ENCODE measurements at regions of chr6 and their contacts with region 1.

Region 1: DNA sequence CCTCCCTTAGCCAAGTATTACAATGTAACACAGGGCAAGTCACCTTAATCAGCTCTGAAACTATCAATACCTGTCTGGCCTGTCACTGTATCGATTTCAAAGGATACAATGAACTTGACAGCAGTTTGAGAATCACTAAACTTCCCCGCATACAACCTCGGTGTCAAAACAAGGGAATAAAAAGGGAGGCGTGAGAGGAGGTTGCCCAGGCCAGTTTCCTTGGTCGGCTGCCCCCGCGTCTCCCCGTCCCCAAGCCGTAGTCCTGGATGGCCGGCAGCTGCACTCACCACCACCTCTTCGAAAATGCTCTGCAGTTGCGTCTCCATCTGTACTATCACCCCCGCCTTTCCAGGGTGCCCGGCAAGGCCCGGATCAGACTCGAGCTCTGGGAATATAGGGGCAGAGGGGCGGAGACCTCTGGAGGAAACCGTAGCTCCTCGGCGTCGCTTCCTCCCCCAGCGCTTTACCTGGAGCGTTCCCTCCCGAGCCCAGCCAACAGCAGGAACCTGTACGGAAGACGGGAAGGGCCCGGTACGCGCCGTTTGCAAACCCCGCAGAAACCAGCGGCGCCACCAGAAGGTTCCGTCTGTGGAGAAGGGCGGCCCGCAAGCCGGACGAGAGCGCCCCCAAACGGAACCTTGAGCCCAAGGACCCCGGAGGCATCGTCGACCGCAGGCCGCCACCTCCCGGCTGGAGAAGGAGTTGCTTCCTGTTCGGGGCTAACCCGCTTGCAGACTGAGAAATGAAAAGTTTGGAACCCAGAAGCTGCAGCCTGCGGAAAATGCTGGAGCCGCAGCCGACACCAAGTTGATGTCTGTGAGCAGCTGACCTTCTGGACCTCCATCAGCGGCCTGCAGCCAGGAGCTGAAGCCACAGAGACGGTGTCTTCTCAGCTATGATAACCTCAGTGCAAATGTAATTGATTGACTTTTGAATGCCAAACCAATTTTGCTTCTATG is at the start of gene MED23:
- DNase-seq: peak; percentile 91
- H3K4me3 ChIP-seq: peak within 1 kb of the TSS; percentile 86
- H3K27ac ChIP-seq: peak within 1 kb of the TSS; percentile 41
- H3K27me3 ChIP-seq: peaks cover 3% of the 10 kb centered on the region
- CTCF ChIP-seq: peak; percentile 100
- polyA plus RNA-seq, gene MED23: 32.5 and 40.1 TPM in 2 replicates

Region 2: GRCh38 chr6:131581523-131581922 is 46.5 kb before region 1 on chr6:
- CTCF ChIA-PET with region 1: interaction called, 13 read pairs
- POLR2A ChIA-PET with region 1: no interaction called
- DNase-seq: no peak
- H3K4me3 ChIP-seq: no peak overlapping the region
- H3K27ac ChIP-seq: no peak overlapping the region
- H3K27me3 ChIP-seq: no peaks in the 10 kb centered on the region
- CTCF ChIP-seq: no peak

Region 3: DNA sequence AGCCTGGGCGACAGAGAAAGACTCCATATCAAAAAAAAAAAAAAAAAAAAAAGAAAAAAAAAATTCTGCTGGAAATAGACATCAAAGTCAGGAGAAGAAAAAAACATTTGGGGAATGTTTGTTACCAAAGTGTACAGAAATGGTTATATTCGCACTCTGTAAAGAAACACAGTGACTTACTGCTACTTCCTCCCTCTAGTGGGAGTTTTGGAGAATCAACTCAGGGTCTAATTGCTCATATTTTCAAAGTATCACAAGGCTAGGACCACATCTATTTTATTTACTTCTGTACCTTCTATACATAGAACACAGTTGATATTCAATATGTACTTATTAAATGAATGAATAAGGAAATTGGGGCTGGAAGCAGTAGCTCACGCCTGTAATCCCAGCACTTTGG is 30.6 kb before region 1 on chr6:
- CTCF ChIA-PET with region 1: interaction called, 59 read pairs
- POLR2A ChIA-PET with region 1: no interaction called
- DNase-seq: no peak
- H3K4me3 ChIP-seq: no peak overlapping the region
- H3K27ac ChIP-seq: no peak overlapping the region
- H3K27me3 ChIP-seq: no peaks in the 10 kb centered on the region
- CTCF ChIP-seq: peak; percentile 47

Region 4: GRCh38 chr6:131602781-131603312 is 25.2 kb before region 1 on chr6:
- CTCF ChIA-PET with region 1: interaction called, 59 read pairs
- POLR2A ChIA-PET with region 1: no interaction called
- DNase-seq: peak; percentile 84
- H3K4me3 ChIP-seq: no peak overlapping the region
- H3K27ac ChIP-seq: no peak overlapping the region
- H3K27me3 ChIP-seq: no peaks in the 10 kb centered on the region
- CTCF ChIP-seq: no peak

Region 5: GRCh38 chr6:131615275-131615674 is 12.7 kb before region 1 on chr6:
- CTCF ChIA-PET with region 1: interaction called, 42 read pairs
- POLR2A ChIA-PET with region 1: interaction called, 8 read pairs
- DNase-seq: no peak
- H3K4me3 ChIP-seq: no peak overlapping the region
- H3K27ac ChIP-seq: no peak overlapping the region
- H3K27me3 ChIP-seq: no peaks in the 10 kb centered on the region
- CTCF ChIP-seq: no peak

Region 6: DNA sequence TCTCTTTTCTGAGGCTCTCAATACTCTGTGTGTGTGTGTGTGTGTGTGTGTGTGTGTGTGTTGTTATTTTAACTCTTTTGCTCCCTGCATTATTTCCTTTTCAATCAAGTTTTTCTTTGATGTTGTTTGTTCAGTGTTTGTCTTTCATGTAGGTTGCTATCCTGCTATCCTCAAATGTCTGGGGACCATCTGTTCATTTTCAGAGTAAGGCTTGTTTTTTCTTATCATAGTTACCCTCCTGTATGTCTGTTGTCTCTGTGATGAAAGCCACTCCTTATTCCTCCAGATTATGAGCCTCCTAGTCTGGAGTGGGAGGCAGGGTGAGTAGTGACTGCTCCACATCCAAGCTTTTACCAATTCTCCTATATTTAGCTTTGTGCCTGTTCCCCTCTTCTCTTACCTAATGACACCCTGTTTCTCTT is 18.3 kb after region 1 on chr6:
- CTCF ChIA-PET with region 1: interaction called, 16 read pairs
- POLR2A ChIA-PET with region 1: no interaction called
- DNase-seq: no peak
- H3K4me3 ChIP-seq: no peak overlapping the region
- H3K27ac ChIP-seq: no peak overlapping the region
- H3K27me3 ChIP-seq: peaks cover 4% of the 10 kb centered on the region
- CTCF ChIP-seq: no peak

Region 7: DNA sequence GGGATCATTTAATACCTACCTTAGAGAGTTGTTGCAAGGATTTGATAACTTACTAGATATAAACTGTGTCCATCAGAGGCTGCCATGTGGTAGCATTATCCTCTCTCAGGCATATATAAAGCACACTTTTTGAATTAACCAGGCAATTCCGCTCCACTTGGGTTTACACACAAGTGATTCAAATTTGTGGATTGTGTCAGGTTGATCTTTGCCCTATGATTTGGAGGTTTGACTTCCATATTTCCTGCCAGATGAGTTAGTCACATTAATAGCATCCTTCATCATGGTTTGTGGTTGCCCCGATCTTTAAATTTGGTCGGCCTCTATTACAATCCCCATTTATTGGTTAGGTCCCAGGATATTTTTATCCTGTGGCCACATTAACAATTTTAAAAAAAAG is 127.6 kb after region 1 on chr6:
- CTCF ChIA-PET with region 1: no interaction called
- POLR2A ChIA-PET with region 1: no interaction called
- DNase-seq: peak; percentile 66
- H3K4me3 ChIP-seq: no peak overlapping the region
- H3K27ac ChIP-seq: no peak overlapping the region
- H3K27me3 ChIP-seq: no peaks in the 10 kb centered on the region
- CTCF ChIP-seq: no peak

Region 8: GRCh38 chr6:131813991-131814390 is 186.0 kb after region 1 on chr6:
- CTCF ChIA-PET with region 1: no interaction called
- POLR2A ChIA-PET with region 1: no interaction called
- DNase-seq: no peak
- H3K4me3 ChIP-seq: no peak overlapping the region
- H3K27ac ChIP-seq: no peak overlapping the region
- H3K27me3 ChIP-seq: no peaks in the 10 kb centered on the region
- CTCF ChIP-seq: no peak

Region 9: GRCh38 chr6:132227904-132228303 is 599.9 kb after region 1 on chr6:
- CTCF ChIA-PET with region 1: no interaction called
- POLR2A ChIA-PET with region 1: no interaction called
- DNase-seq: peak; percentile 81
- H3K4me3 ChIP-seq: no peak overlapping the region
- H3K27ac ChIP-seq: no peak overlapping the region
- H3K27me3 ChIP-seq: no peaks in the 10 kb centered on the region
- CTCF ChIP-seq: no peak